ENCODE measurements at regions of chr19 and their contacts with region 1.

Region 1: GRCh38 chr19:11528551-11529341 is at the start of gene ECSIT:
- DNase-seq: peak; percentile 93 to 94
- H3K4me3 ChIP-seq: peak within 1 kb of the TSS; percentile 71 to 87 (median 82)
- H3K27ac ChIP-seq: peak within 1 kb of the TSS; percentile 86; the same call in 1 of the 2 replicates
- H3K4me1 ChIP-seq: no peaks in the 10 kb centered on the region; a peak in 2 of 7 replicates
- H3K27me3 ChIP-seq: no peaks in the 10 kb centered on the region
- CTCF ChIP-seq: no peak
- EP300 ChIP-seq: no peak
- POLR2A ChIP-seq: peak; percentile 66 to 91
- RAD21 ChIP-seq: no peak
- total RNA-seq, gene ECSIT: 53.5 and 55.7 TPM in 2 replicates

Region 2: DNA sequence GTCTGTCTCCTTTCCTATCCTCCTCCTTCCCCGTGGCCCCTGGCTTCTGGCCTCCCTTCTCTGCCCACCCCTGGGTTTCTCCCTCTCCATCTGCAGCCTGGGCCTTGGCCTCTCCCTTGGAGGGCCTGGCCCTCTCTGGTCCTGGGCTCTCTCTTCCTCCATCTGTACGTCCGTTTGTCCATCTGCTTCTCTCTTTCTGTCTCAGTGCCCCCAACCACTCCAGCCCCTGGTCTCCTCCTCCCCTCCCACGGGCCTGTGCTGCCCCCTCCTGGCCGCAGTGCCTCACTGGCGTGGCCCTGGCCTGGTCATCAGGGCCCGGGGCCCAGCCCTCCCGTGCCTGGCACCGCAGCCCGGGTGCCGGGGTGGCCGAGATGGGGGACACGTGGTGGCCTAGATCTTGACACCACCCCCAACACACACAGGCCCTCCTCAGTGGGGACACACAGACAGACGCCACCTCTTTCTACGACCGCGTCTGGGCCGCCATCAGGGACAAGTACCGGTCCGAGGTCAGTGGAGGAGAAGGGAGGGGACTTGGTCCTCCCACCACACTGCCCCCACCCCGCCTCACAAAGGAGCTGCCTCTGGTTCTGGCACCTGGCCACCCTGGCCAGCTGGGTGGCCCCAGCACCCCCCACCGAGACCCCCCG is 82.0 kb before region 1 on chr19:
- CTCF ChIA-PET with region 1: no interaction called
- POLR2A ChIA-PET with region 1: no interaction called
- DNase-seq: peak in 1 of 2 experiments; percentile 95
- H3K4me3 ChIP-seq: no peak overlapping the region
- H3K27ac ChIP-seq: no peak overlapping the region
- H3K4me1 ChIP-seq: peaks cover under 1 to 4% (median 2%) of the 10 kb centered on the region in 4 experiments; a peak in 6 of 7 replicates
- H3K27me3 ChIP-seq: no peaks in the 10 kb centered on the region
- CTCF ChIP-seq: peak; percentile 91 to 99 (median 91)
- EP300 ChIP-seq: no peak
- POLR2A ChIP-seq: no peak
- RAD21 ChIP-seq: peak; percentile 90 to 95

Region 3: DNA sequence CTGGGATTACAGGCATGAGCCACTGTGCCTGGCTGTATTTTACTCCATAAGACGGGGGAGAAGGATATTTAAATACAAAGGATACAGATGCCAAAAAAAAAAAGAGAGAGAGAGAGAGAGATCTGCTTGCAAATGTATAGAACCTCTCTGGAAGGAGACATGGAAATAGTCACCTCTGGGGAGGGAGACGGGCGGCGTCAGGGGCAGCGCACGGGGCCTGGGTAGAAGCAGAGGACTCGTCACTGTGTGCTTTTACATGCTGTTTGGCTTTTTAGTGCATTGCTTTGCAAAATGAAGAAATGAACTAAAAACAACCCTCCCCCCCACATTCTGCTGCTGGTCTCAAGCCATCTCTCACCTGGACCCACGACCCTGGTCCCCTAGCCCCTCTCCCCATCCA is 18.3 kb before region 1 on chr19:
- CTCF ChIA-PET with region 1: interaction called, 3 read pairs
- POLR2A ChIA-PET with region 1: interaction called, 11 read pairs
- DNase-seq: no peak
- H3K4me3 ChIP-seq: no peak overlapping the region
- H3K27ac ChIP-seq: no peak overlapping the region
- H3K4me1 ChIP-seq: peaks cover 0 to 4% (median 2%) of the 10 kb centered on the region in 4 experiments; a peak in 4 of 7 replicates
- H3K27me3 ChIP-seq: no peaks in the 10 kb centered on the region
- CTCF ChIP-seq: no peak
- EP300 ChIP-seq: no peak
- POLR2A ChIP-seq: no peak
- RAD21 ChIP-seq: no peak

Measured in H1 (cell line).